ENCODE measurements at regions of chr11 and their contacts with region 1.

Region 1: DNA sequence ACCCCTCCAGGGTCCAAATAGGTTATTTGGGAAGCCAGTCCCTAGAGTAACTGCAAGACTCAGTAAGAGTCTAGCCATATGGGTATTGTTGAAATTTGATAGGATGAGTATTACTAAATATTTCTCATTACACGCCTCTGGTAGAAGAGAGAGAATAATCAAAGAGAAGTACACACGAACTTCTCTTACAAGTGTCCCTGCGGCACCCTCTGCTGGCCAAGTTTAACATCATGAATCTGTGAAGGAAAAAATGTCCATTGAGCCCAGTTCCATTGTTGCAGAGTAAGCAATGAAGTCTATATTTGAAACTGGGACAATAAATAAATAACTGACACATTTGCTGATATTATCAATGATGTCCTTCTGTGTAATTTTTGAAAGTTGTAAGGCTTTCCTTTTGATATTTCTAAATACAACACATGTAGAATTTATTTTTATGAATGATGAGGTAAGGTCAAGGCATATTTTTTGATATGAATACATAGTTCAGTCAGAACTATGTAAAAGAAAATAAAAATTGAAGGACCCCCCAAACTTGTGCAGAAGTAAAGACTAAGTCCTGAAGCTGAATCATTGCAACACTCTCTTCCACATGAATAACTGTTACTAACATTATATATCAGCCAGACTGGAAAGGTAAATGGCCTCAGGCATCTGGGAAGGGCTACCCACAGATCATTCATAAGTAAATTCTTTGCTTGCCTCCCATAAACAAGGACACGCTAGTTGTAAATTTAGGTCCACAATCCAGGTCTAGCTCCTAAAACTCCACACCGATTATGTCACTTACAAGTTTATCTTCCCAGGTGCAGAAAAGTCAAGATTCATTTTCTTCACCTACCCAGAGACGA is 10.0 kb downstream of the OR51L1 start:
- DNase-seq: peak; percentile 69
- ATAC-seq: no peak

Region 2: DNA sequence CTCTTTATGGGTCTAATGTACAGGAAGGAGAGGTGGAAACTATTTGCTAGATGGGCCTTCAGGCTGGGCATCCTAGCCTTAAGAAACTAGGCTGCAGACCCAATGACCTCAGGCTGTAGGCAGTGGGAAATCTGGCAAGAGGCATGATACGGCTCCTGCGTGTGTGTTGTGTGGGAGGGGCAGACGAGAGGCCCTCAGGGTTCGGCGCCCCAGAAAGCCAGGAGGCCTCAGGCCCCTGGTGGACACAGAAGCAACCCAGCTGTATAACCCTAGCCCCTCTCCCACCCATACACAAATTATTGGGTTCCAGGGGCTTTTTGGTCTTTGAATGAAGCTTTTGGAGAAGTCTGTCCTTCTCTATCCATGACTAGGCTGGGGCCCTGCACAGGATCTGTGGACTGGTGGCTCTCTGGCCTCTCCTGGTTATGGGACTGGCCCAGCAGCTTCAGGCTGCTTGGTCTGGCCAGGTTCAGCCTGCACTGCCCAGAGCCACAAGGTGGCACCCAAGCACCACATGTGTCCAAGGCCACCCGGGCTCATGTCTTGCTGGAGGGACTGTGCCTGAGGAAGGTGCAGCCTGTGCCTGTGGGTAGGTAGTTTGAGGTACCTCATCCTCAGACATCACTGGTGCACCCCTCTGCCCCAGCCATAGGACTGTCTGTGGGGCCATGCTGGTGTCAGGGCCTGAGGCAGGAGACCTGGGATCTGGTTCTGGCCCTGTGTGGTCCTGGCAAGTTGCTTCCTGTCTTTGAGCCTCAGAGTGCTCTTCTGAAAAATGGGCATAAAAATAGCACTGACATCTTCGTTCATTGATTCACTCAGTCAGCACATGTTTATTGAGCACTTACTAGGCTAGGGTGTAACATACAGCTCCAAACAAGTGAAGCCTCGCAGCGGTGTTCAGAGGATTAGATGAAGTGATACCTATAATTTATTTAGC is 822.6 kb before region 1 on chr11:
- intact Hi-C with region 1: loop called (anchors 5 kb)
- DNase-seq: no peak
- ATAC-seq: peak; percentile 66

Region 3: GRCh38 chr11:4636962-4637661 is 367.5 kb before region 1 on chr11 and contains the start of gene OR51D1:
- intact Hi-C with region 1: loop called (anchors 5 kb)
- DNase-seq: peak; percentile 80
- ATAC-seq: peak; percentile 92
- total RNA-seq, gene OR51D1: not detected

Region 4: DNA sequence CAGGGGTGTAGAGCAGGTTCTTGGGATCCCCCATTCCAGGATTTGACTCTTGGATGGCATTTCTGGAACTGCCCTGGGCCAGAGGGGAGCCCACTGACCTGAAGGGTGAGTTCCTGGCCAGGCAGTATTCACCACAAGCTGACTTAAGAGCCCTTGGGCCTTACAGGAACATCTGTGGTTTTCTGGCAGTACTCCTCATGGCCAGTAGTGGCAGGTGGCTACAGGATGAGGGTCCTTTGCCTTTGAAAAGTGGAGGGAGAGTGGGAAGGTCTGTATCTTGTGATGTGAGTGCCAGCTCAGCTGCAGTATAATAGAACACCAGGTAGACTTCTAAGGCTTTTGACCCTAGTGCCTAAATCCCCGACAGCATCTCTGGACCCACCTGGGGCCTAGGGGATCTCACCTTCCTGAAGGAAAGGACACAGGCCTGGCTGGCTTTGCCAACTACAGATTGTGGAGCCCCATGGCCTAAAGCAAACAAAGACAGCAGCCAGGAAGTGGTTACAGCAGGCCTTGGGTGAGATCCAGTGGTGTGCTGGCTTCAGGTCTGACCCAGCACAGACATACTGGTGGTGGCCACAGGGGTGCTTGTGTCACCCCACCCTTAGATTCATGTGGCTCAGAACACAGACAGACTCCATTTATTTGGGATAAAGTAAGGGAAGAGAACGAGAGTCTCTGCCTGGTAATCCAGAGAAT is 164.6 kb before region 1 on chr11:
- intact Hi-C with region 1: loop called (anchors 10 kb)
- DNase-seq: no peak
- ATAC-seq: no peak

Measured in Right ventricle myocardium inferior (tissue), 1 donor.